ENCODE measurements at regions of chr2 and their contacts with region 1.

Region 1: DNA sequence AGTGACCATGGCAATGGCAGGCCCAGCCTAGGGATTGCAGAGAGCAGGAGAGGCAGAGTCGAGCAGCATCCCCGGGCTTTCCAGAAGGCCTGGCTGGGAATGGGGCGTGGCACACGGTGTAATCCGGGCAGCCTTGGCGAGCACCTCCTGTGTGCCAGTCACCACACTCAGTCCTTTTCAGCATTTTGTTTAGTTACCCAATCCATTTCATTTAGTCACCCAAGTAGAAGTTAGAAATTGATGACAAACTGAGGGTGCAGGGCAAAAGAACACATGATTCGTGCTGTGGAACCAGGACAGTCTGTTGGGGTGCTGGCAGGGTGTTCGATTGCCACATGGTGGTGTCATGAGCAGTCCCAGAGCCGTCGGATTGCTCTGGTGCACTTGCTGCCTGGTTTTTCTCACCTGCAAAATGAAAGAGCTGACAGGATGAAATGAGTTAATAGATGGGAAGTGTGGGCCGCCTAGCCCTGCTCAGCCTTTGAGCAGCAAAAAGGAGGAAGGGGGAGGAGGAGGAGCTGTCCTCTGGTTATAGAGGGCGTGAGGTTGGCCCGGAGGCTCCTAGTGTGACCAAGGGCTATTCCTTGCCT is 299.4 kb downstream of the AGAP1 start:
- DNase-seq: peak in 2 of 5 donors; percentile 56 to 61
- ATAC-seq: peak; percentile 79 to 94 (median 88)
- H3K4me3 ChIP-seq: no peak overlapping the region
- H3K27ac ChIP-seq: no peak overlapping the region
- H3K4me1 ChIP-seq: peaks cover 0 to 7% (median 0%) of the 10 kb centered on the region in 12 donors
- H3K27me3 ChIP-seq: no peaks in the 10 kb centered on the region
- CTCF ChIP-seq: peak in 10 of 12 donors; percentile 10 to 51 (median 32)
- POLR2A ChIP-seq: no peak

Region 2: DNA sequence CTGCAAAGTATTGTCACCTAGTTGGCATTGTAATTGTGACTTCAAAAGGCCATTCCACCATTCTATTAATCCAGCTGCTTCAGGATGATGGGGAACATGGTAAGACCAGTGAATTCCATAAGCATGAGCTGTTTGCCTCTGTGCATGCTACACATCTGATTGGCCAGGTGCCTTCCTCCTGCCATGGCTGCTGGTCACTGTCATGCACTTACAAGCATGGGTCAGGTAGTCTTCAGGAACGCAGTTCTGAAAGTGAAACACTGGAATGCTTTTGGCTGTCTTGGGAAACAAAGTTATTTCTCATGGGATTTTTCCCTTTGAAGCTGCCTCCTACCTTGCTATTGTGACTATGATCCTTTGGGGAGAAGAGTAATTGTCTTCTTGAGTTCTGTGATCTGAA is 107.4 kb after region 1 on chr2:
- intact Hi-C with region 1: no loop called
- DNase-seq: no peak
- ATAC-seq: no peak
- H3K4me3 ChIP-seq: no peak overlapping the region
- H3K27ac ChIP-seq: no peak overlapping the region
- H3K4me1 ChIP-seq: no peaks in the 10 kb centered on the region
- H3K27me3 ChIP-seq: no peaks in the 10 kb centered on the region
- CTCF ChIP-seq: no peak
- POLR2A ChIP-seq: no peak

Region 3: DNA sequence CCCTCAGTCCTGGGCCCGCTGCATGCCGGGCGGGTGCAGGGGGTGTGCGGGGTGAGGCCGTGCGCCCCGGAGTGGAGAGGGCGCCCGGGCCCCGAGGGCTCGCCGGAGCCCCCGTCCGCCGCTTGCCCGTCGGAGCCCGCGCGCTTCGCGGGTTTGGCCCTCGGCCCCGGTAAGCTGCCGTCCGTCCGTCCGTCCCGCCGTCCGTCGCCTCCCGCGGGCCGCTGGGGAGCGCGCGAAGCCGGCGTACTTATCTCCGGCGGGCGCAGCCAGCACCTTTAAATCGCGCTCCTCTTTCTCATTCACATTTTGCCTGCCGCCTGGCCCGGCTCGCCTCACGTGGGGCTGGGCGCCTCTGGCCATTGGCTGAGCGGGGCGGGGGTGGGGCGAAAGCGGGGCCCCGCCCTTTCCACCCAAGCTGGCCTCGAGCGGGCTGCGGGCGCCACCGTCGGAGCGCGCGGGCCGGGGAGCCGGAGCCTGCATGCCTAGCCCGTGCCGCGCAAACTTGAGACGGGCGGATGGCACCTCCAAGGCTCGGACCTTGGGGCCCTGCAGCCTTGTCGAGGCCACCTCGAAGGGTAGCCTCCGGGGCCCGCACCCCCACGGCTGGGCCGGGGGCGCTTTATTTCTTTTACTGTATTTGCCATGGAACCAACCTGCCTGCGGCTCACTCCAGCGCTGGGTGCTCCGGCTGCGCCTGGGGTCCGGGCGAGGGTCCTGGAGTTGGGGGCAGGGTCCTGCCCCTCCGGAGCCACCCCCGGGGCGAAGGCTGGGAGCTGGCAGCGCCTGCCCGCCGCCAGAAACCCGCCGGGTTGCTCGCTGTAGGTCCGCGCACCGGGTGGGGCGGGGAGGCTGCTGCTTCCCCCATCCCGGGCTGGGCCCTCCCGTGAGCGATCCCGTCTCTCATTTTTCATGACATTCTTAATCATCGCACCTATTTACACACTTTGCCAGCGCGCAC is 375.1 kb after region 1 on chr2 and contains the start of gene GBX2:
- intact Hi-C with region 1: loop called in 1 of 10 experiments (anchors 5 kb)
- DNase-seq: peak in 1 of 5 donors; percentile 29
- ATAC-seq: peak; percentile 18 to 65 (median 35)
- H3K4me3 ChIP-seq: peak within 1 kb of the TSS; percentile 16 to 49 (median 40)
- H3K27ac ChIP-seq: no peak within 1 kb of the TSS
- H3K4me1 ChIP-seq: peaks cover 18 to 79% (median 46%) of the 10 kb centered on the region in 12 donors
- H3K27me3 ChIP-seq: peaks cover 86 to 100% (median 99%) of the 10 kb centered on the region in 9 donors
- CTCF ChIP-seq: no peak
- POLR2A ChIP-seq: no peak
- total RNA-seq, gene GBX2: 0.17 TPM in 1 of 9 donors, not detected in the others

Region 4: GRCh38 chr2:236180831-236181453 is 387.7 kb after region 1 on chr2:
- intact Hi-C with region 1: loop called in 1 of 10 experiments (anchors 5 kb)
- DNase-seq: no peak
- ATAC-seq: peak in 2 of 4 donors; percentile 33 to 44
- H3K4me3 ChIP-seq: no peak overlapping the region
- H3K27ac ChIP-seq: no peak overlapping the region
- H3K4me1 ChIP-seq: peaks cover 0 to 30% (median 15%) of the 10 kb centered on the region in 12 donors
- H3K27me3 ChIP-seq: peaks cover 37 to 62% (median 55%) of the 10 kb centered on the region in 9 donors
- CTCF ChIP-seq: peak; percentile 48 to 80 (median 71)
- POLR2A ChIP-seq: no peak

Measured in heart left ventricle (tissue), 16 donors.